Ascending aorta (tissue), 2 donors: ENCODE measurements at regions of chr17 and their contacts with region 1.

Region 1: DNA sequence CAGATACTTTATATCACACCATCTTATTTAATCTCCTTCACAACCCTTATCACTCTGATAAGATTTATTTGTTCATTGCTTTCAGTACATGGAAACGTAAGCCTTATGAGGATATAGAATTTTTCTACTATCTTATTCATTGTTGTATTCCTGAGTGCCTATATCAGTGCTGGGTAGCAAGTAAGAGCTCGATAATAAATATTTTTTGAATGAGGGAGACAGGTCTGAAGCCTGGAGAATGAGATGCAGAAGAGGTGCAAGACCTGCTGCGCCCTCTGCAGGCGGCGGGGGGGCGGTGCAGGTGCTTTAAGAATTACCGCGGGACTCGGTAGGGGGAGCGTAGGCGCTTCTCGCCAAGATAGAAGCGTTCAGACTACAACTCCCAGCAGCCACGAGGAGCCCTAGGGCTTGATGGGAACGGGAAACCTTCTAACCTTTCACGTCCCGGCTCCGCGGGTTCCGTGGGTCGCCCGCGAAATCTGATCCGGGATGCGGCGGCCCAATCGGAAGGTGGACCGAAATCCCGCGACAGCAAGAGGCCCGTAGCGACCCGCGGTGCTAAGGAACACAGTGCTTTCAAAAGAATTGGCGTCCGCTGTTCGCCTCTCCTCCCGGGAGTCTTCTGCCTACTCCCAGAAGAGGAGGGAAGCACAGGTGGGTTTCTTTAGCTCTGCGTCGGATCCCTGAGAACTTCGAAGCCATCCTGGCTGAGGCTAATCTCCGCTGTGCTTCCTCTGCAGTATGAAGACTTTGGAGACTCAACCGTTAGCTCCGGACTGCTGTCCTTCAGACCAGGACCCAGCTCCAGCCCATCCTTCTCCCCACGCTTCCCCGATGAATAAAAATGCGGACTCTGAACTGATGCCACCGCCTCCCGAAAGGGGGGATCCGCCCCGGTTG is at the start of gene WRAP53:
- DNase-seq: peak; percentile 97 to 100
- H3K4me3 ChIP-seq: peak within 1 kb of the TSS; percentile 70 to 79
- H3K27ac ChIP-seq: peak within 1 kb of the TSS; percentile 87 to 94
- H3K4me1 ChIP-seq: peaks cover 9 to 16% of the 10 kb centered on the region in 2 donors
- H3K27me3 ChIP-seq: no peaks in the 10 kb centered on the region
- CTCF ChIP-seq: peak; percentile 94 to 99 (median 99)
- total RNA-seq, gene WRAP53: 1.5 TPM

Region 2: GRCh38 chr17:7306911-7307686 is 381.1 kb before region 1 on chr17 and contains the start of gene EIF5A:
- intact Hi-C with region 1: loop called (anchors 5 kb)
- DNase-seq: peak; percentile 98 to 99
- H3K4me3 ChIP-seq: peak within 1 kb of the TSS; percentile 76 to 99
- H3K27ac ChIP-seq: peak within 1 kb of the TSS; percentile 97 to 100
- H3K4me1 ChIP-seq: peaks cover 3 to 26% of the 10 kb centered on the region in 2 donors
- H3K27me3 ChIP-seq: no peaks in the 10 kb centered on the region
- CTCF ChIP-seq: no peak
- total RNA-seq, gene EIF5A: 248 TPM

Region 3: GRCh38 chr17:7403977-7404736 is 284.0 kb before region 1 on chr17 and contains the start of gene TMEM256:
- intact Hi-C with region 1: loop called (anchors 10 kb)
- DNase-seq: peak; percentile 97 to 100
- H3K4me3 ChIP-seq: peak within 1 kb of the TSS; percentile 69 to 85
- H3K27ac ChIP-seq: peak within 1 kb of the TSS; percentile 89 to 92
- H3K4me1 ChIP-seq: peaks cover 0 to 22% of the 10 kb centered on the region in 2 donors
- H3K27me3 ChIP-seq: no peaks in the 10 kb centered on the region
- CTCF ChIP-seq: peak in 2 of 3 experiments; percentile 5 to 25
- total RNA-seq, gene TMEM256: 241 TPM

Region 4: GRCh38 chr17:7515911-7516610 is 172.1 kb before region 1 on chr17:
- intact Hi-C with region 1: loop called (anchors 5 kb)
- DNase-seq: no peak
- H3K4me3 ChIP-seq: no peak overlapping the region
- H3K27ac ChIP-seq: peak overlapping the region in 1 of 2 donors; percentile 18
- H3K4me1 ChIP-seq: no peaks in the 10 kb centered on the region
- H3K27me3 ChIP-seq: no peaks in the 10 kb centered on the region
- CTCF ChIP-seq: no peak

Region 5: GRCh38 chr17:7614422-7615264 is 73.5 kb before region 1 on chr17 and contains the start of gene FXR2:
- intact Hi-C with region 1: loop called (anchors 1 kb)
- DNase-seq: peak; percentile 98 to 100
- H3K4me3 ChIP-seq: peak within 1 kb of the TSS; percentile 91 to 97
- H3K27ac ChIP-seq: peak within 1 kb of the TSS; percentile 85 to 89
- H3K4me1 ChIP-seq: peaks cover 0 to 26% of the 10 kb centered on the region in 2 donors
- H3K27me3 ChIP-seq: no peaks in the 10 kb centered on the region
- CTCF ChIP-seq: peak; percentile 61 to 67 (median 62)
- total RNA-seq, gene FXR2: 19.3 TPM

Region 6: GRCh38 chr17:7716901-7717755 is 29.0 kb after region 1 on chr17 and contains the start of gene DNAH2:
- intact Hi-C with region 1: loop called (anchors 1 kb)
- DNase-seq: peak; percentile 28 to 86
- H3K4me3 ChIP-seq: peak within 1 kb of the TSS; percentile 69 to 73
- H3K27ac ChIP-seq: no peak within 1 kb of the TSS
- H3K4me1 ChIP-seq: peaks cover 0 to 18% of the 10 kb centered on the region in 2 donors
- H3K27me3 ChIP-seq: no peaks in the 10 kb centered on the region
- CTCF ChIP-seq: peak in 2 of 3 experiments; percentile 7 to 52
- total RNA-seq, gene DNAH2: 0.43 TPM

Region 7: GRCh38 chr17:7844292-7845154 is 156.4 kb after region 1 on chr17:
- intact Hi-C with region 1: loop called (anchors 2 kb)
- DNase-seq: peak; percentile 81 to 97
- H3K4me3 ChIP-seq: peak overlapping the region; percentile 80 to 88
- H3K27ac ChIP-seq: peak overlapping the region; percentile 97 to 99
- H3K4me1 ChIP-seq: peaks cover 6 to 18% of the 10 kb centered on the region in 2 donors
- H3K27me3 ChIP-seq: no peaks in the 10 kb centered on the region
- CTCF ChIP-seq: no peak